ENCODE measurements at regions of chr2 and their contacts with region 1.

Region 1: GRCh38 chr2:173749315-173749714 is 215.9 kb downstream of the SP3 start:
- DNase-seq: peak; percentile 6
- H3K4me3 ChIP-seq: no peak overlapping the region
- H3K27ac ChIP-seq: no peak overlapping the region
- H3K4me1 ChIP-seq: no peaks in the 10 kb centered on the region
- H3K27me3 ChIP-seq: no peaks in the 10 kb centered on the region
- CTCF ChIP-seq: peak in 1 of 2 donors; percentile 52

Region 2: GRCh38 chr2:173783382-173783781 is 34.1 kb after region 1 on chr2:
- CTCF ChIA-PET with region 1: no interaction called
- dilution Hi-C with region 1: no loop called
- in situ Hi-C with region 1: no loop called
- intact Hi-C with region 1: no loop called
- DNase-seq: no peak
- H3K4me3 ChIP-seq: no peak overlapping the region
- H3K27ac ChIP-seq: no peak overlapping the region
- H3K4me1 ChIP-seq: no peaks in the 10 kb centered on the region
- H3K27me3 ChIP-seq: peaks cover 2% of the 10 kb centered on the region
- CTCF ChIP-seq: no peak

Region 3: DNA sequence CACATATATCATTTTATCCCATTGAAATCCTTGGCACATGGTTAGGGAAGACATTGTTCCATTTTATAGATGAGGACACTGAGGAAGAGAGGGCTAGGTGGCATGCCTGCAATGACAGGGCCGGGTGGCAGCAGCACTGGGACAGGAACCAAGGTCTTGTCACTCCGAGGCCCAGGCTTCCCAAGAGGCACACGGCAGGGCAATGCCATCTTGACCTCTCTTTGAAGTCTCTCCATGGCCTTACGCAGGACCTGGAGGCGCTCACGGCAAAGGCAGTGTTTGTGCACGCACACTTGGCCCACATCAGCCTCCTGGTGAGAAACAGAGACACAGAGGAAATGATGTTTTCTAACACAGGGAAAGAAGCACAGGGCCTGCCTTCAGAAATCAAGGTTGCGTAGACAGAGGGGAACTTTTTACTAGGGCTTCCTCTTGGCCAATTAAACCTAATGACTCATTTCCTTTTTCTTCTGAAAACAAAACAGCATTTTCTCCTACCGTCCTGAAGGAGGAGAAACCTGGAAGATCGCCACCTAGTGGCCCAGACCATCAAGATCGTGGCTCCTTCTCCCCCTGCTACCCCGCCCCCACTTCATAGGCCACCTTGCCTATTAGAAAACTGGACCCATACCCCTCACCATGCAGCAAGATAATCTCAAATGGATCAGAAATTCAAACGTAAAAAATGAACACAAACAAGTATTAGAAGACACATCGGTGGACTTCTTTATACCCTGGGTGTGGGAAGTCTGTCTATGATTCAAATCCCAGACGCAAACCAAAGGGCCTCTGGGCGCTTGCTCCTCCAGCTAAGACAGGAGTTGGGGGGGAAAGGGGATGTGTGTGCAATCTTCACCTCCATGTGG is 290.5 kb after region 1 on chr2:
- CTCF ChIA-PET with region 1: no interaction called
- dilution Hi-C with region 1: no loop called
- in situ Hi-C with region 1: no loop called
- intact Hi-C with region 1: loop called (anchors 10 kb)
- DNase-seq: peak; percentile 90
- H3K4me3 ChIP-seq: peak overlapping the region in 1 of 3 experiments; percentile 14
- H3K27ac ChIP-seq: peak overlapping the region; percentile 69
- H3K4me1 ChIP-seq: peaks cover 17% of the 10 kb centered on the region
- H3K27me3 ChIP-seq: no peaks in the 10 kb centered on the region
- CTCF ChIP-seq: peak; percentile 80 to 93

Region 4: DNA sequence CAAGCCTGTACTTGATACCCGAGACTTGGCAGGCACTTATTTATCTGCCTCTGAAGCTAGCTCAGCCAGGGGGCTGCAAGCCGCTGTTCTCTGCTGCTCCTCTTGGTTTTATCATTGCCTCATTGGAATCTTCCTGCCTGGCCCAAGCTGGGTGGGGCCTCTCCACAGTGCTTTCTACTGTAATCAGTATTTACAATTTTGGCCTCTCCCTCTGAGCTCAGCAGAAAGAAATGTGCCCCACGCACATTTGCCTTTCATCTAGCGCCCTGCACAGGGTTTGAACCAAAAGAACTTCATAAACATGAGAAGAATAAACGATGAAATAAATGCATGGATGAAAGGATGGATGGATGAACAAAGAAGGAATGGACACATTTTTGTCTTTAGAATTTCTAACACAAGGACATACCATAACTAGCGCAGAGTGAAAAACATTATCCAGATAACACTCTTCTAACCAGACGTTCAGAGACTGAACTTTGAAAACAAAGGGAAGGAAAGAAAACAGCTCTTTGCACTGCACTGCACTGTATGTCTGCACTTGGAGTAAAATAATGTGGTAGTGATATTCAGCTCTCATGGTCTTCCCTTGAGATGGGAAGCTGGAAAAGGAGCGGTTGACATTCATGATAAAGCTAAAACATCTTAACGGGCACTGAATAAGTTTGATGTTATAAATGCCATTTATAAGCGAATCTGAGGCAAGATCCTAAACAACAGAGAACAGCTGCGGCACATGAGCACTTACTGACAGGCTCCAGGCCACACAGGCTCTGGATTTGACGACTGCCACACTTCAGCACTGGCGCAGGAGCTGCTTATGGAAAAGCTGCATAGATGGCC is 302.6 kb after region 1 on chr2:
- CTCF ChIA-PET with region 1: no interaction called
- dilution Hi-C with region 1: no loop called
- in situ Hi-C with region 1: loop called in 1 of 2 experiments (anchors 25 kb)
- intact Hi-C with region 1: loop called (anchors 10 kb)
- DNase-seq: peak; percentile 53
- H3K4me3 ChIP-seq: no peak overlapping the region
- H3K27ac ChIP-seq: no peak overlapping the region
- H3K4me1 ChIP-seq: peaks cover 6% of the 10 kb centered on the region
- H3K27me3 ChIP-seq: no peaks in the 10 kb centered on the region
- CTCF ChIP-seq: no peak

Measured in mammary epithelial cell (primary cell).